GM12878 (cell line): ENCODE measurements at regions of chr6 and their contacts with region 1.

Region 1: GRCh38 chr6:5517796-5518195 is 256.5 kb downstream of the FARS2 start:
- DNase-seq: no peak
- ATAC-seq: peak; percentile 72
- H3K4me3 ChIP-seq: no peak overlapping the region
- H3K27ac ChIP-seq: peak overlapping the region; percentile 9; the same call in 1 of the 2 replicates
- H3K4me1 ChIP-seq: peaks cover 37% of the 10 kb centered on the region
- H3K27me3 ChIP-seq: no peaks in the 10 kb centered on the region
- CTCF ChIP-seq: no peak
- EP300 ChIP-seq: no peak
- POLR2A ChIP-seq: no peak
- RAD21 ChIP-seq: peak; percentile 6; the same call in 1 of the 2 replicates

Region 2: DNA sequence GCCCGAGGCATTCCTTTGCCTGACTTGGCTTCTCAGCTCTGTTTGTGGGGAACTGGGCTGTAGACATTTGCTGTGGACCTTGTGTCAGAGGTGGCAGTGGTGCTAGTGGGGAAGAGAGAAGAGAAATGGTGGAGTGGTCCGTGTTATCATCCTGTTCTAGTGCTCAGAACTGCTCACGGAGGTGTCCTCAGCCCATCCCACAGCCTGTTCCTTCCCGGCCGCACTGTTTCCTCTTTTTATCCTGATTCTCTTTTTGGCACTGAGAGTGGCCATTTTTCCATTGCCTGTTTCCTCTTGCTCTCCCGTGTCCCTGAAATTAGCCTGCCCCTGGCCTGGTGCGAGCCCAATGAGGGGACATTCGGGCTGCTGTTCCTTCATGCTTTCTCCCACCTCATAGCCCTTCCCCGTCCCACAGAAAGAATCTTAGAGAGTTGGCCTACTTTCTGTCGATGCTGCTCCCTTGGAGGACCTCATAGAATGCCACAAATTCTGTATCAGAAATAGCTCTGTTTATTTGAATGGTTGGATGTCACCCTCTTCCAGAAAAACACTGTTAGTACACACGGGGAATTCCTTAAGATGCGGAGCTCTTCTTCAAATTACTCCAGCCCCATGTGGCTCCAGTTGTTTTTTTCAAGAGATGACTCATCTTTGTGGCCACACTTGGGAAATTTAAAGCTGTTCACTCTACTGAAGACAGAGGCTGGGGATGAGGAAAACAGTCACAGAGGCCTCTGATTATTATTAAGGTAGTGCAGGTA is 230.4 kb before region 1 on chr6:
- CTCF ChIA-PET with region 1: no interaction called
- POLR2A ChIA-PET with region 1: no interaction called
- RAD21 ChIA-PET with region 1: no interaction called
- SMC1A ChIA-PET with region 1: no interaction called
- in situ Hi-C with region 1: no loop called
- intact Hi-C with region 1: no loop called
- DNase-seq: no peak
- ATAC-seq: no peak
- H3K4me3 ChIP-seq: no peak overlapping the region
- H3K27ac ChIP-seq: no peak overlapping the region; the same call in 1 of the 2 replicates
- H3K4me1 ChIP-seq: peaks cover 14% of the 10 kb centered on the region
- H3K27me3 ChIP-seq: no peaks in the 10 kb centered on the region
- CTCF ChIP-seq: no peak
- EP300 ChIP-seq: no peak
- POLR2A ChIP-seq: no peak
- RAD21 ChIP-seq: no peak

Region 3: GRCh38 chr6:5507131-5507681 is 10.6 kb before region 1 on chr6:
- CTCF ChIA-PET with region 1: interaction called, 53 read pairs
- POLR2A ChIA-PET with region 1: interaction called, 20 read pairs
- RAD21 ChIA-PET with region 1: interaction called, 33 read pairs
- SMC1A ChIA-PET with region 1: interaction called, 101 read pairs
- in situ Hi-C with region 1: no loop called
- intact Hi-C with region 1: no loop called
- DNase-seq: peak; percentile 92
- ATAC-seq: peak; percentile 94
- H3K4me3 ChIP-seq: peak overlapping the region; percentile 60
- H3K27ac ChIP-seq: peak overlapping the region; percentile 88
- H3K4me1 ChIP-seq: peaks cover 26% of the 10 kb centered on the region
- H3K27me3 ChIP-seq: no peaks in the 10 kb centered on the region
- CTCF ChIP-seq: no peak
- EP300 ChIP-seq: peak in 1 of 2 experiments; percentile 85; a peak in 3 of 4 replicates
- POLR2A ChIP-seq: no peak
- RAD21 ChIP-seq: no peak

Region 4: GRCh38 chr6:5529733-5530132 is 11.9 kb after region 1 on chr6:
- CTCF ChIA-PET with region 1: interaction called, 3 read pairs
- POLR2A ChIA-PET with region 1: interaction called, 3 read pairs
- RAD21 ChIA-PET with region 1: no interaction called
- SMC1A ChIA-PET with region 1: interaction called, 14 read pairs
- in situ Hi-C with region 1: no loop called
- intact Hi-C with region 1: no loop called
- DNase-seq: no peak
- ATAC-seq: no peak
- H3K4me3 ChIP-seq: no peak overlapping the region
- H3K27ac ChIP-seq: no peak overlapping the region
- H3K4me1 ChIP-seq: no peaks in the 10 kb centered on the region
- H3K27me3 ChIP-seq: no peaks in the 10 kb centered on the region
- CTCF ChIP-seq: no peak
- EP300 ChIP-seq: no peak
- POLR2A ChIP-seq: no peak
- RAD21 ChIP-seq: no peak